HCT116 (cell line): ENCODE measurements at regions of chr9 and their contacts with region 1.

Region 1: DNA sequence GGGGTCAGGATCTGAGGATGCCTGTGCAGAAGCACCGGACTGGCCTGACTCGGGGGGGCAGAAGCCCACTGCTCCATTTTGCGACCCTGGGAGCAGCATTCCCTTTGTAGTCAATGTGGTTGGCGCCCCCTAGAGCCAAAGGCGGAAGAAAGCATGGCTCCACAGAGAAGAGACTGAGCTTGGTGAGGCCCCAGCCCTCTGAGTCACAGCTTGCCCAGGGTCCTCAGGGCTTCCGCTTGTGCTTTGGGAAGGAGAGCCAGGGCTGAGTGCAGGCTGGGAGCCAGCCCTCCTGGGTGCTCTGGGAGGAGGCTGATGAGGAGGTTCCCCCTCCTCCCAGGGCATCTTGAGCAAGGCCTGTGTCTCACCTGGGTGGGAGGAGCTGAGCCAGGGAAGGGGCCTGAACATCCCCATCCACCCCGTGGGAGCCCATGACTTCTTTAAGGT is 5.5 kb upstream of the AQP3 start:
- DNase-seq: peak; percentile 63
- ATAC-seq: peak; percentile 87
- H3K4me3 ChIP-seq: peak overlapping the region in 1 of 2 experiments; percentile 13; a peak in 2 of 4 replicates
- H3K27ac ChIP-seq: peak overlapping the region; percentile 49
- H3K4me1 ChIP-seq: peaks cover 36 to 58% of the 10 kb centered on the region in 2 experiments
- H3K27me3 ChIP-seq: no peaks in the 10 kb centered on the region
- CTCF ChIP-seq: peak in 2 of 3 experiments; percentile 91; a peak in 4 of 6 replicates
- POLR2A ChIP-seq: no peak
- RAD21 ChIP-seq: no peak

Region 2: GRCh38 chr9:33430942-33431341 is 21.9 kb before region 1 on chr9:
- CTCF ChIA-PET with region 1: interaction called, 22 read pairs
- POLR2A ChIA-PET with region 1: interaction called, 4 read pairs
- RAD21 ChIA-PET with region 1: no interaction called
- intact Hi-C with region 1: no loop called
- DNase-seq: no peak
- ATAC-seq: peak; percentile 34; the same call in 1 of the 2 replicates
- H3K4me3 ChIP-seq: no peak overlapping the region
- H3K27ac ChIP-seq: no peak overlapping the region
- H3K4me1 ChIP-seq: peaks cover 0 to 9% of the 10 kb centered on the region in 2 experiments; a peak in 2 of 4 replicates
- H3K27me3 ChIP-seq: no peaks in the 10 kb centered on the region
- CTCF ChIP-seq: no peak
- POLR2A ChIP-seq: no peak
- RAD21 ChIP-seq: no peak

Region 3: GRCh38 chr9:33649463-33649862 is 196.6 kb after region 1 on chr9:
- CTCF ChIA-PET with region 1: no interaction called
- POLR2A ChIA-PET with region 1: no interaction called
- RAD21 ChIA-PET with region 1: no interaction called
- intact Hi-C with region 1: no loop called
- DNase-seq: no peak
- ATAC-seq: no peak
- H3K4me3 ChIP-seq: no peak overlapping the region
- H3K27ac ChIP-seq: no peak overlapping the region
- H3K4me1 ChIP-seq: no peaks in the 10 kb centered on the region
- H3K27me3 ChIP-seq: peaks cover 41% of the 10 kb centered on the region
- CTCF ChIP-seq: no peak
- POLR2A ChIP-seq: no peak
- RAD21 ChIP-seq: no peak